ENCODE measurements at regions of chr1 and their contacts with region 1.

Region 1: DNA sequence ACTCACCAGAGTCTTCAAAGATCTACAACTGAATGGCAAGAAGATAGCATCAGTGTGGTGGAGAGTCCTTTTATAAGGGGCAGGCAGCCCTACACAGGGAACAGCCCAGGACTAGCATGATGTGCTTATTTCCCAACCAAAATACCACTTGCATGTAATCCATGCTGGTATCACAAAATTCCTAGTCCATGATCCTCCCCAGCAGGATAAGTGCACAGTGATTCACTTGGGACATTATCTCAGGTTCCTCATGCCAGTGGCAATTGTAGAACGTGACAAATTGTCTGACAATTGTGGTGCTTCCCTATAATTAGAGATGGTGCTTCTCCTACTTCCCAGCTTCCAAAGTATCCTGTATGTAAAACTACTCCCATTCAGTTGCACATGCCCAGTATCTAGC is at the start of gene SPRR2G:
- DNase-seq: no peak
- H3K4me3 ChIP-seq: no peak within 1 kb of the TSS
- H3K27ac ChIP-seq: no peak within 1 kb of the TSS
- H3K4me1 ChIP-seq: no peaks in the 10 kb centered on the region
- H3K27me3 ChIP-seq: no peaks in the 10 kb centered on the region
- CTCF ChIP-seq: no peak
- total RNA-seq, gene SPRR2G: not detected

Region 2: DNA sequence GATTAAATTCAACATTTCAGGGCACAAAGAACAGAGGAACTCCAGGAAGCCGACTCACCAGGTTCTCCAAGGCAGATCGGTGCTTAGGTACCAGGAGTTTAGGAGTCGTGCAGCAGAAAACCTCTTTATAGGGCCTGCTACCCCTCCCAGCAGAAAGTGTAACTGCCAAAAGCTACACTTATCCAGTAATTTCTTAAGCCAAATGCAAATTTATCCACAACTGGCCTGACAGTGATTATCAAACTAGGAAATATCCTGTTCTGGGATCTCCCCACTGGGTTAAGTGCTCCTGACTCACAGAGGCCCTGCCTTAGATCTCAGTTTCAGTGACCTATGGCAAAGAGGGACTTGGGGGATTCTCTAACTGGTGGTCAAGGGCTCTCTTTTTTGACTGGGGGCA is 37.4 kb before region 1 on chr1 and contains the start of gene SPRR2F:
- CTCF ChIA-PET with region 1: no interaction called
- dilution Hi-C with region 1: loop called (anchors 5 kb)
- in situ Hi-C with region 1: no loop called
- intact Hi-C with region 1: no loop called
- DNase-seq: no peak
- H3K4me3 ChIP-seq: no peak within 1 kb of the TSS
- H3K27ac ChIP-seq: no peak within 1 kb of the TSS
- H3K4me1 ChIP-seq: no peaks in the 10 kb centered on the region
- H3K27me3 ChIP-seq: no peaks in the 10 kb centered on the region
- CTCF ChIP-seq: no peak
- total RNA-seq, gene SPRR2F: not detected